ENCODE measurements at regions of chr2 and their contacts with region 1.

Region 1: GRCh38 chr2:101188683-101189405 is 37.7 kb upstream of the TBC1D8 start:
- DNase-seq: peak; percentile 71
- ATAC-seq: peak; percentile 91
- H3K4me3 Mint-ChIP-seq: no peak overlapping the region
- H3K27ac Mint-ChIP-seq: no peak overlapping the region
- H3K4me1 Mint-ChIP-seq: peaks cover 34% of the 10 kb centered on the region
- H3K27me3 Mint-ChIP-seq: no peaks in the 10 kb centered on the region
- CTCF ChIP-seq: peak; percentile 70

Region 2: DNA sequence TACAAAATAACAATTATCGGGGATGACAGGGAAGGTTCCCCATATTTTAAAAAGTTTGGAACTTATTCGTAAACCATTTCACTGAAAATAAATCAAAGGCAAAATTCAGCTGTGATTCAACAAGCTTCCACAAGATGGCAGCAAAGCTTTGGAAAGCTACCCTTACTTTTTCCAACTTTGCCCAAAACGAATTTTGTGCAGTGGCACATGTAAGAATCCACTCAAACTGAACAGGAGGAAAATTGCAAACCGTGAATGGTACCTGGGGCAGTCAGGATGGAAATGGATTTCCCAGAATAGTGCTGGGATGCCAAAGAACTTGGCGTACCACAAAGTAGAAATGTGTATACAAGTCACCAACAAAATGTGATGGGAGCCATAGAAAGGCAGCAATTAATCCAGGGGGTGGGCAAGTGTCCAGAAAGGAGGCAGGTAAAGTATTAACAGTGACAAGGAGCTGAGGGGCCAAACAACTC is 176.1 kb before region 1 on chr2:
- CTCF ChIA-PET with region 1: interaction called, 16 read pairs
- POLR2A ChIA-PET with region 1: no interaction called
- DNase-seq: no peak
- ATAC-seq: no peak
- H3K4me3 Mint-ChIP-seq: no peak overlapping the region
- H3K27ac Mint-ChIP-seq: no peak overlapping the region
- H3K4me1 Mint-ChIP-seq: peaks cover 10% of the 10 kb centered on the region
- H3K27me3 Mint-ChIP-seq: no peaks in the 10 kb centered on the region
- CTCF ChIP-seq: peak; percentile 70; the same call in 1 of the 2 replicates

Region 3: DNA sequence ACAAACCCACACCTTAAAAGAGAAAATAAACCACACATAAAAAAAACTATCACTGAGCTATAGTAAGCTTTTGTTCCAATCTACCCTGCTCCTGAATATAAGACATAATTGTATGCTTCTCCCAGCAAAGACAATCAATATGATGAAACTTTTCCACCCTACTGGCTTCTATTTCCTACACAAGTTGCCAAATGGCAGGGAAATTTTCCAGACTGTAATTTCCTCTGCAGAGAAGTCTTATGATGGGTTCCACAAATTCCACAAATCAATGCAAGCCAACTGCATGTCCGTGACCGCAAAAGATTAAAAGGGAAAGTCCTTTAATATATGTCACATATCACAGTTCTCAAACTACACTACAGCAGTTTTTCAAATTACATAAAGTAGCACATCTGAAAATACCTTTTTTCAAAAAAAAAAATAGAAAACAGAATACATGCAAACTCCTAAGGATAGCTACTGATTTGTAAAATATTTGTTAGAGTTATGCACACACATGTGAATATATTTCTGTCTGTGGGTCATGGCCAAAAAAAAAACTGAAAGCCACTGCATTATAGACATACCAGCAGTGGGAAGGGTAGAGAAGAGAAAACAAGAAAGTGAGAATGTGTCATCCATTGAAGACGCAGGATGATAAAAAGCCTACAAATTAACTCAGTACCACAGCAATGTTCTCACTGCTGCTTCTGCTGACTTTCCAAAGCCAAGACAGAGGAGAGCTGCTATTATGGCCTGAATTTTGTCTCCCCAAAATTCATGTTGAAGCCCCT is 125.3 kb before region 1 on chr2:
- CTCF ChIA-PET with region 1: interaction called, 10 read pairs
- POLR2A ChIA-PET with region 1: no interaction called
- DNase-seq: no peak
- ATAC-seq: no peak
- H3K4me3 Mint-ChIP-seq: no peak overlapping the region
- H3K27ac Mint-ChIP-seq: no peak overlapping the region
- H3K4me1 Mint-ChIP-seq: peaks cover 23% of the 10 kb centered on the region
- H3K27me3 Mint-ChIP-seq: no peaks in the 10 kb centered on the region
- CTCF ChIP-seq: no peak

Region 4: GRCh38 chr2:101205521-101205998 is 16.7 kb after region 1 on chr2:
- CTCF ChIA-PET with region 1: interaction called, 74 read pairs
- POLR2A ChIA-PET with region 1: no interaction called
- DNase-seq: peak; percentile 41
- ATAC-seq: peak; percentile 99
- H3K4me3 Mint-ChIP-seq: no peak overlapping the region
- H3K27ac Mint-ChIP-seq: no peak overlapping the region
- H3K4me1 Mint-ChIP-seq: peaks cover 10% of the 10 kb centered on the region
- H3K27me3 Mint-ChIP-seq: 0 out of 2 replicates have a peak, but pooled peaks cover under 1% of the 10 kb centered on the region
- CTCF ChIP-seq: no peak

Region 5: GRCh38 chr2:101252408-101253012 is 63.7 kb after region 1 on chr2 and contains the start of gene CNOT11:
- CTCF ChIA-PET with region 1: interaction called, 13 read pairs
- POLR2A ChIA-PET with region 1: no interaction called
- DNase-seq: peak; percentile 99
- ATAC-seq: peak; percentile 84
- H3K4me3 Mint-ChIP-seq: peak within 1 kb of the TSS; percentile 99
- H3K27ac Mint-ChIP-seq: peak within 1 kb of the TSS; percentile 96
- H3K4me1 Mint-ChIP-seq: peaks cover 54% of the 10 kb centered on the region
- H3K27me3 Mint-ChIP-seq: no peaks in the 10 kb centered on the region
- CTCF ChIP-seq: no peak
- total RNA-seq, gene CNOT11: 47.4 to 54.0 TPM (median 48.9 TPM) in 3 replicates

Measured in WTC11 (cell line).